CD8-positive, alpha-beta T cell (primary cell): ENCODE measurements at regions of chr6 and their contacts with region 1.

Region 1: DNA sequence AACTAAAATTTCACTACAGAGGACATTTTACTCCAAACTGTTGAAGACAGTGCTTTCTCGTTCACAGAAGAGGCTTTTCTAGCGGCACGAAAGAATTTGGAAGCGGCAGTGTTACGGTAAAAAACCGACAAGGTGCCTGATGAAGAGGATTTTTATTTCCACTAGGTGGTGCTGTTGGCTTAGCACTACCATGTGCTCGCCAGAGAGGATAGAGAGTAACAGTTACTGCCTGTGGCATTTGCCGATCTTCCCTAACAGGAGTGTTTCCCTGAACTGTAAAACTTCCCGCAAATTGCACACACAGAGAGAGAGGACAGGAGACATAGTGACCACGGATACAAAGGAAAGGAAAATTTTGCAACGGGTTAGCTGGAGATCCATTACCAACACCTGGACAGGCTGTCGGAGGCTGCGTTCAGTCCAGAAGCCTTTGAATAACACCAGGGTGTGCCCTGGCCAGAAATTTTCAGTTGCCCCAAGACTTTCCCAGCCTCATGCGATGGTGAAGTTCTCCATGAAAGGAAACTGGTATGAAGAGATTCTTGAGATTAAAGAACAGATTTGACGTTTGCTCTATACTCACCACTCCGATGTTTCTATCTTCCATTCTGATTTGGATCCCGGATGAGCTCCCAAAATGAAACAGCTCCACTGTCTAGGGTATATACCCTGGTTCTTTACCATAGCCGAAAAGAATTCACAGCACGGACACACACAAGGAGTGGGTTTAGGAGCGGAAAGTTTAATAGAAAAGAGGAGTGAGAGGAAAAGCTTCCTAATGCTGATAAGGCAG is 48.1 kb downstream of the HLA-DPB1 start:
- DNase-seq: peak in 2 of 9 experiments; percentile 35 to 49
- ATAC-seq: peak; percentile 52
- H3K4me3 ChIP-seq: no peak overlapping the region
- H3K4me3 Mint-ChIP-seq: no peak overlapping the region
- H3K27ac ChIP-seq: no peak overlapping the region
- H3K27ac Mint-ChIP-seq: no peak overlapping the region
- H3K4me1 ChIP-seq: no peaks in the 10 kb centered on the region
- H3K4me1 Mint-ChIP-seq: no peaks in the 10 kb centered on the region
- H3K27me3 ChIP-seq: no peaks in the 10 kb centered on the region
- H3K27me3 Mint-ChIP-seq: peaks cover 15% of the 10 kb centered on the region
- CTCF ChIP-seq: peak; percentile 47

Region 2: GRCh38 chr6:32355018-32355417 is 768.9 kb before region 1 on chr6:
- CTCF ChIA-PET with region 1: no interaction called
- POLR2A ChIA-PET with region 1: no interaction called
- intact Hi-C with region 1: no loop called
- DNase-seq: no peak
- ATAC-seq: no peak
- H3K4me3 ChIP-seq: no peak overlapping the region
- H3K4me3 Mint-ChIP-seq: no peak overlapping the region
- H3K27ac ChIP-seq: no peak overlapping the region
- H3K27ac Mint-ChIP-seq: no peak overlapping the region
- H3K4me1 ChIP-seq: no peaks in the 10 kb centered on the region
- H3K4me1 Mint-ChIP-seq: no peaks in the 10 kb centered on the region
- H3K27me3 ChIP-seq: peaks cover 0 to under 1% of the 10 kb centered on the region in 2 experiments
- H3K27me3 Mint-ChIP-seq: peaks cover 1% of the 10 kb centered on the region
- CTCF ChIP-seq: no peak

Region 3: GRCh38 chr6:32853541-32854375 is 270.2 kb before region 1 on chr6 and contains the starts of genes PSMB9 and TAP1:
- CTCF ChIA-PET with region 1: no interaction called
- POLR2A ChIA-PET with region 1: no interaction called
- intact Hi-C with region 1: no loop called
- DNase-seq: peak; percentile 83 to 99 (median 94)
- ATAC-seq: peak; percentile 78
- H3K4me3 ChIP-seq: peak within 1 kb of the TSS; percentile 85 to 99
- H3K4me3 Mint-ChIP-seq: peak within 1 kb of the TSS; percentile 99
- H3K27ac ChIP-seq: peak within 1 kb of the TSS; percentile 98
- H3K27ac Mint-ChIP-seq: peak within 1 kb of the TSS; percentile 100
- H3K4me1 ChIP-seq: peaks cover 62% of the 10 kb centered on the region
- H3K4me1 Mint-ChIP-seq: peaks cover 69% of the 10 kb centered on the region
- H3K27me3 ChIP-seq: no peaks in the 10 kb centered on the region
- H3K27me3 Mint-ChIP-seq: no peaks in the 10 kb centered on the region
- CTCF ChIP-seq: peak; percentile 89
- total RNA-seq, gene PSMB9: 32.9 to 34.7 TPM
- total RNA-seq, gene TAP1: 98.0 to 98.1 TPM

Region 4: DNA sequence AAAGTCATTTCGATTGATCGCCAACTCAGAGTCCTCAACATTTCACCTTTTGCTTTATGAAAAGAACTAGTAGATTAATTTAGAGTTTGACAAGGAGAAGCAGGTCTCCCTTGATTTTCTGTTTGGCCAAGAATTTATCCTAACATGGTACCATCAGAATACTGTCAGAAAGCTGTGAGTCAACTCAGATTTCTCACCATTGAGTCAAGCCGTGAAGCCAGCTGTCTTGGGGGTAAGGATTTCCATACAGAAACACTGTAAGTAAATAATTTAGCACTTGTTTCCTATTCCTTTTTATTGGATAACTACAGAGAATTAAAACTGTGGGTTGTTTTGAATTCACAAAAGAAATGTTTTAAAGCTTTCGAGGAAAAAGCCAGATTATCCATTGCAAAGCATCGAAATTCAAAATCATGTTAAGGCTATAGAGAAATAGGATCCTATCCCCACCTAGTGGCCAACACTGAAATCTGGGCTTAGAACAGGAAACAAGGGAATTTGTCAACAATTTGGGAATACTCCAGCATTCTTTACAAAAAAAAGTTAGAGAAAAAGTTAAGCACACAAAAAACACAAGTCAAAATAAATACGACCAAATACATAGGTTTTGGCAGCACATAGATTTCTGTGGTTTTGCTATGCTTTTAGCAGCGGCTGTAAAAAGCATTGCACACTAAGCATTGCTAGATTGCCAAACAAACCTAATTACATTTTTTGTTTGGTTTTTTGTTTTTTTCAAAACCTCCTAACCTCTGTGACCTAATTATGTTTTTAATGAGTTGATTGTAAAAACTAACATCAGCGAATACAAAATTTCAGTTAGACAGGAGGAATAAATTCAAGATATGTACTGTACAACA is 24.1 kb after region 1 on chr6:
- CTCF ChIA-PET with region 1: interaction called, 16 read pairs
- POLR2A ChIA-PET with region 1: no interaction called
- intact Hi-C with region 1: no loop called
- DNase-seq: peak in 2 of 9 experiments; percentile 42 to 52
- ATAC-seq: no peak
- H3K4me3 ChIP-seq: no peak overlapping the region
- H3K4me3 Mint-ChIP-seq: no peak overlapping the region
- H3K27ac ChIP-seq: no peak overlapping the region
- H3K27ac Mint-ChIP-seq: no peak overlapping the region
- H3K4me1 ChIP-seq: no peaks in the 10 kb centered on the region
- H3K4me1 Mint-ChIP-seq: peaks cover 2% of the 10 kb centered on the region
- H3K27me3 ChIP-seq: no peaks in the 10 kb centered on the region
- H3K27me3 Mint-ChIP-seq: peaks cover 18% of the 10 kb centered on the region
- CTCF ChIP-seq: peak; percentile 71

Region 5: DNA sequence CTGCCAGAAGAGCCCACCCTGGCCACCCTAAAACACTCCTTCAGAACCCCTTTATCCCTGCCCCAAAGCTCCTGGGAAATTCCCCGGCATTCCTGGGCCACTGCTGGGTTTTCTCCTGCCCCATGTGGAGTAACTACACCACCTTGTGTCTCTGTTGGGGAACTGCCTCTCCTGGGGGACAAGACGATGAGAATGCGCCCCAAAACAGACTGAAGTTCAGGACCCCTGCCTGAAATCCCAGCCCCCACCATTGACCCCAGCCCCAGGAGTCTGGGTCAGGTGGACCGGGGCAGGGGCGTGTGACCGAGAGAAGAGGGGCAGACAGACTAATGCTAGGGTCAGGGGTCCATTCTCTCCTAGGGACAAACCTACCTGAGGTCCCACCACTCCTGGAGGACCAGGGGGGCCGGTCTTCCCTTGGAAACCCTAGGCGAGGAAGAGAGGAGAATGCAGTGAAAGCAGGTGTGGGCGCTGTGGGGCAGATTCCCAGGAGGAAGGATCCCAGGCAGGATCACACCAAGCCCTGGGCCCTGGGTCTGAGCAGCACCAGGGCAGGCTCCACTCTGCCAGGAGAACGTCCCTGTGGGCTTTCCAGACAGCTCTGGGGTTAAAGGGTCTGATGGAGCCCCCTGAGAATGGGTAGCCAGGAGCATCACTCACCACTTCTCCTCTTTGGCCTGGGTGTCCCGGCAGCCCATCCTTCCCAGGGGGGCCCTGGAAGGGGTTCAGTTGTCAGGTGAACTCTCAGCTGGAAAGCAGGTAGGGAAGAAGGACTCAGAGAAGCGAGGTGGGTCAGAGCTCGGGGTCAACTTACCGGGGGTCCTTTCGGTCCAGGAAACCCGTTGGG is 49.0 kb after region 1 on chr6:
- CTCF ChIA-PET with region 1: interaction called, 4 read pairs
- POLR2A ChIA-PET with region 1: no interaction called
- intact Hi-C with region 1: loop called in 1 of 2 experiments (anchors 5 kb)
- DNase-seq: peak in 1 of 9 experiments; percentile 36
- ATAC-seq: no peak
- H3K4me3 ChIP-seq: no peak overlapping the region
- H3K4me3 Mint-ChIP-seq: no peak overlapping the region
- H3K27ac ChIP-seq: no peak overlapping the region
- H3K27ac Mint-ChIP-seq: no peak overlapping the region
- H3K4me1 ChIP-seq: no peaks in the 10 kb centered on the region
- H3K4me1 Mint-ChIP-seq: no peaks in the 10 kb centered on the region
- H3K27me3 ChIP-seq: peaks cover 0 to 2% of the 10 kb centered on the region in 2 experiments
- H3K27me3 Mint-ChIP-seq: peaks cover 4% of the 10 kb centered on the region
- CTCF ChIP-seq: no peak

Region 6: DNA sequence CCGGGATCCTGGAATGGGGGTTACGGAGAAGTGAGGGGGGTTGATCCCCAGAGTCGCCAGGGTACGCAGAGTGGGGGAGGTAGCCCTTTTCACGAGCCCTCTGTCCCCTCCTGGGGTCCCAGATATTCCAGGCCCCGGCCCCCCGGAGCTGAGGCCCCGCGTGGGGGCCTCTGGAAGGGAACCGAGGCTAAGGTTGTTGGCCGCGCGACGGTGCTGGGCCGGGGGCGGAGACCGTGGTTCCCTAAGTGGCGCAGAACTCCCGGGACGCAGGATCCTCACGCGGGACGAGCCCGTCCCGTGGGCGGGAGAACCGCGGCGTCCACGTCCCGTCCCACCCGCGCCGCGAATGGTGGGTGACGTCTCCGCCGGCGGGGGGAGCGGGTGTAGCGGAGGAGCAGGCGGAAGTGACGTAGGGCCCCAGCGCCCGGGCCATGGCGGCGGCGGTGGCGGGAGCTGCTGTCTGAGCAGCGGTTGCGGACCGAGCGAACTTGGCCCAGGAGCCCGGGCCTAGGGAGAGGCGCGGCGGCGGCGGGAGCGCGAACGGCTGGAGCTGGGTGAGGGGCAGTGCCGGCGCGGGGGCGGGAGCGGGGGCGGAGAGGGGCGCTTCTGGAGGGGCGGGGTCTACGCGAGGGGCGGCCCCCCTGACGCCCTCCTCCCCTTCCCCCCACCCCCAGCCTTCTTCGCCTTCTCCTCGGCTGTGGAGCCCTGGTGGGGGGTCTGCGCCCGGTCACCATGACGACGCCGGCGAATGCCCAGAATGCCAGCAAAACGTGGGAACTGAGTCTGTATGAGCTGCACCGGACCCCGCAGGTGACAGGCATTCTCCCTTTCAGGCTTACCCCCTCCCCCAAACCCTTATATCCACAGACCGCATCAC is 84.4 kb after region 1 on chr6 and contains the start of gene RING1:
- CTCF ChIA-PET with region 1: no interaction called
- POLR2A ChIA-PET with region 1: no interaction called
- intact Hi-C with region 1: no loop called
- DNase-seq: peak; percentile 72 to 94 (median 87)
- ATAC-seq: peak; percentile 59
- H3K4me3 ChIP-seq: peak within 1 kb of the TSS; percentile 96 to 97
- H3K4me3 Mint-ChIP-seq: peak within 1 kb of the TSS; percentile 94
- H3K27ac ChIP-seq: peak within 1 kb of the TSS; percentile 91 to 98
- H3K27ac Mint-ChIP-seq: peak within 1 kb of the TSS; percentile 96
- H3K4me1 ChIP-seq: peaks cover 51% of the 10 kb centered on the region
- H3K4me1 Mint-ChIP-seq: peaks cover 57% of the 10 kb centered on the region
- H3K27me3 ChIP-seq: peaks cover 0 to 6% of the 10 kb centered on the region in 2 experiments
- H3K27me3 Mint-ChIP-seq: no peaks in the 10 kb centered on the region
- CTCF ChIP-seq: no peak
- total RNA-seq, gene RING1: 29.1 to 29.5 TPM